ENCODE measurements at regions of chr2 and their contacts with region 1.

Region 1: DNA sequence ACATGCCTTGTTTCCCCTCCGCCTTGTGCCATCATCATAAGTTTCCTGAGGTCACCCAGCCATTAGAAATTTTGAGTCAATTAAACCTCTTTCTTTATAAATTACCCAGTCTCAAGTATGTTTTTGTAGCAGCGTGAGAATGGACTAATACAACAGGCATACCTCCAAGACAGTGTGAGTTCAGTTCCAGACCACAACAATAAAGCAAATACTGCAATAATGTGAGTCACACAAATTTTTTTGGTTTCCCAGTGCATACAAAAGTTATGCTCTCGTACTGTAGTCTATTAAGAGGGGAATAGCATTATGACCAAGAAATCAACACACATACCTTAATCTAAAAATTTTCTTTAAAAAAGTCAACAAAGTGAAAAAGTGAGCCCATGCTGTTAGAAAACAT is 217.2 kb downstream of the NR4A2 start:
- DNase-seq: no peak
- ATAC-seq: no peak
- H3K4me3 ChIP-seq: no peak overlapping the region
- H3K4me3 Mint-ChIP-seq: no peak overlapping the region
- H3K27ac ChIP-seq: no peak overlapping the region
- H3K27ac Mint-ChIP-seq: no peak overlapping the region
- H3K4me1 ChIP-seq: no peaks in the 10 kb centered on the region
- H3K4me1 Mint-ChIP-seq: no peaks in the 10 kb centered on the region
- H3K27me3 ChIP-seq: no peaks in the 10 kb centered on the region
- H3K27me3 Mint-ChIP-seq: no peaks in the 10 kb centered on the region

Region 2: GRCh38 chr2:156099382-156099781 is 16.0 kb before region 1 on chr2:
- CTCF ChIA-PET with region 1: no interaction called
- POLR2A ChIA-PET with region 1: no interaction called
- DNase-seq: no peak
- ATAC-seq: no peak
- H3K4me3 ChIP-seq: no peak overlapping the region
- H3K4me3 Mint-ChIP-seq: no peak overlapping the region
- H3K27ac ChIP-seq: no peak overlapping the region
- H3K27ac Mint-ChIP-seq: no peak overlapping the region
- H3K4me1 ChIP-seq: no peaks in the 10 kb centered on the region
- H3K4me1 Mint-ChIP-seq: no peaks in the 10 kb centered on the region
- H3K27me3 ChIP-seq: no peaks in the 10 kb centered on the region
- H3K27me3 Mint-ChIP-seq: peaks cover 0 to 4% of the 10 kb centered on the region in 2 donors

Region 3: GRCh38 chr2:156129227-156129626 is 13.9 kb after region 1 on chr2:
- CTCF ChIA-PET with region 1: no interaction called
- POLR2A ChIA-PET with region 1: interaction called in 1 of 2 experiments, 17 read pairs
- DNase-seq: no peak
- ATAC-seq: no peak
- H3K4me3 ChIP-seq: no peak overlapping the region
- H3K4me3 Mint-ChIP-seq: no peak overlapping the region
- H3K27ac ChIP-seq: no peak overlapping the region
- H3K27ac Mint-ChIP-seq: no peak overlapping the region
- H3K4me1 ChIP-seq: no peaks in the 10 kb centered on the region
- H3K4me1 Mint-ChIP-seq: no peaks in the 10 kb centered on the region
- H3K27me3 ChIP-seq: no peaks in the 10 kb centered on the region
- H3K27me3 Mint-ChIP-seq: peaks cover 0 to 15% of the 10 kb centered on the region in 2 donors

Region 4: DNA sequence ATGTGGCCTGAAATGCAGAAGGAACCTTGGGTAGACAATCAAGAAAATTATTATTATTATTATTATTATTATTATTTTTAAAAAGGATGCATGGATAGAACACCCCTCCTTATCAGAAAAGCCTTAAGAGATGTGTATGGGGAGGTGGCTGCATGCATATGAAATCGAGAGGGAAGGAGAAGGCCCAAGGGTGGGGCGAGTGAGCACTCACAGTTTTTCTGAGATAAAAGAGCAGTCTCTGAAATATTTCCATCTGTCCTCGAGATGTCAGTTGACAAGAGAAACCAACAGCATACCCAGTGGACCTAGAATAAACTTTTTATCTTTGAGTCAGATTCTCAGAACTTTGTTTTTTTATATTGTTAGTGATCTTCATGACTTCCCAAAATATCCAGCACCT is 603.7 kb after region 1 on chr2:
- CTCF ChIA-PET with region 1: no interaction called
- POLR2A ChIA-PET with region 1: no interaction called
- DNase-seq: no peak
- ATAC-seq: no peak
- H3K4me3 ChIP-seq: no peak overlapping the region
- H3K4me3 Mint-ChIP-seq: no peak overlapping the region
- H3K27ac ChIP-seq: no peak overlapping the region
- H3K27ac Mint-ChIP-seq: no peak overlapping the region
- H3K4me1 ChIP-seq: no peaks in the 10 kb centered on the region
- H3K4me1 Mint-ChIP-seq: no peaks in the 10 kb centered on the region
- H3K27me3 ChIP-seq: peaks cover 0 to 3% of the 10 kb centered on the region in 2 experiments
- H3K27me3 Mint-ChIP-seq: peaks cover 6 to 19% of the 10 kb centered on the region in 2 donors